Kidney (tissue), 22 donors: ENCODE measurements at regions of chr22 and their contacts with region 1.

Region 1: GRCh38 chr22:41517172-41518047 is 26.9 kb downstream of the POLR3H start:
- DNase-seq: peak; percentile 69 to 78 (median 74)
- H3K4me3 ChIP-seq: no peak overlapping the region
- H3K27ac ChIP-seq: peak overlapping the region; percentile 1 to 7
- H3K4me1 ChIP-seq: peaks cover 0 to 18% (median 3%) of the 10 kb centered on the region in 3 donors
- H3K27me3 ChIP-seq: no peaks in the 10 kb centered on the region
- CTCF ChIP-seq: peak; percentile 86

Region 2: DNA sequence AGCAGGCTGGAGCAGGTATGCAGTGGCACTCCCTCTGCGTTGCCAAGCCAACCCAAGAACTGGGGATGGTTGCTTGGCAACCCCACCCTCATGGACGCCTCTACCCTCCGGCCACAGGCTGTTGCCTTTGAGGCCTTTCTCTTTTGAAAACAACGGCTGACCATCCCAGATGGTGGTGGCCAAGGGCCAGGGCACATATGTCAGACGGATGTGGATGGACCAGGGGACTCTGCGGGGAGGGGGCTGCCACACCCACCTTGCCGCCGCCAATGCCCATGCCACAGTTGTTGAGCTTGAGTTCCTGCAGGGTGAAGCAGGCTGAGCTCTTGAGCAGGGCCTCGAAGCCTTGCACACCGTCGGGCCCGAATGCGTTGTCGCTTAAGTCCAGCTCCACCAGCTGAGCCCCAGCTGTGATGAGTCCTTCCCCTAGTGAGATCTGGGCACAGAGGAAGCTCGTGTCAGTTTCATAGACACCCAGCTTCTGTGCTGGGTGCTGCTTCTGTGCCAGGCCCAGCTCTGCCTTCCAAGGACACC is 252.9 kb before region 1 on chr22:
- intact Hi-C with region 1: no loop called
- DNase-seq: no peak
- H3K4me3 ChIP-seq: no peak overlapping the region
- H3K27ac ChIP-seq: no peak overlapping the region
- H3K4me1 ChIP-seq: no peaks in the 10 kb centered on the region
- H3K27me3 ChIP-seq: no peaks in the 10 kb centered on the region
- CTCF ChIP-seq: no peak

Region 3: GRCh38 chr22:41403532-41404318 is 113.7 kb before region 1 on chr22:
- intact Hi-C with region 1: loop called (anchors 5 kb)
- DNase-seq: peak; percentile 81 to 94 (median 86)
- H3K4me3 ChIP-seq: no peak overlapping the region
- H3K27ac ChIP-seq: no peak overlapping the region
- H3K4me1 ChIP-seq: peaks cover 0 to 13% (median 11%) of the 10 kb centered on the region in 3 donors
- H3K27me3 ChIP-seq: no peaks in the 10 kb centered on the region
- CTCF ChIP-seq: peak; percentile 98

Region 4: GRCh38 chr22:41688365-41689211 is 171.2 kb after region 1 on chr22 and contains the start of gene SNU13:
- intact Hi-C with region 1: no loop called
- DNase-seq: peak; percentile 92 to 97 (median 96)
- H3K4me3 ChIP-seq: peak within 1 kb of the TSS; percentile 75 to 95 (median 82)
- H3K27ac ChIP-seq: peak within 1 kb of the TSS; percentile 90 to 94
- H3K4me1 ChIP-seq: peaks cover 0 to 6% (median 5%) of the 10 kb centered on the region in 3 donors
- H3K27me3 ChIP-seq: no peaks in the 10 kb centered on the region
- CTCF ChIP-seq: no peak
- total RNA-seq, gene SNU13: 132 TPM